ENCODE measurements at regions of chr4 and their contacts with region 1.

Region 1: DNA sequence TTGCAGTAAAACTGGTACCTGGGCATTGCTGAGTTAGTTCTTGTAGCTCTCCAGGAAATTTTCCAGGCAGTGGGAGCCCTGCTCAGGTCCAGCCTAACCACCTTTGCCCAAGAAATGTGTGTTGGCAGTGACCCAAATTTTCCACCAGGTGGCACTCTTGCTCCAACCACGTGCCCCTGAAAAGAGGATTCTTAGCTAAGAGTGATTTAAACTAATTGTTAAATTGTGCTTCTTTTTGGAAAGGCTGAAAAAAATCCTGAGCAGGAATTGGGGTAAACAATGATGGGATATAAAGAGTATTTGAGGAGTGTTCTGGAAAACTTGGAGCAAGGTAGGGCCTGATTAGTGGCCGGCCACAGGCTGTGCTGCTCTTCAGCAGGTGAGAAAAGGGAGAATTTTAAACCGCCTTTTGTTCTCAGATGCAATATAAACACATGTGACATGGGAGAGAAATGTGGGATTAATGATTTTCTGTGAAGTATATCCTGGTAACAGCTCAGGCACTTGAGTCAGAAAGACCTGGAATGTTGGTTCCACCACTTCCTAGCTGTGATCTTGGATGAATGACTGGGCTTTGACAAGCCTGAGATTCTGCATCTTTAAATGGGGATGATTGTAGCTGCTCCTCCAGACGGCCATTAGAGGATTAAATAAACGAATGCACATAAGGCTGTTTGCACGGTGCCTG is 219.6 kb downstream of the PTTG2 start:
- DNase-seq: peak in 3 of 4 donors; percentile 63 to 81 (median 69)
- ATAC-seq: peak; percentile 84
- H3K4me3 ChIP-seq: no peak overlapping the region
- H3K27ac ChIP-seq: no peak overlapping the region
- H3K4me1 ChIP-seq: peaks cover 0 to 44% of the 10 kb centered on the region in 2 donors
- H3K27me3 ChIP-seq: no peaks in the 10 kb centered on the region
- CTCF ChIP-seq: peak; percentile 82 to 85

Region 2: DNA sequence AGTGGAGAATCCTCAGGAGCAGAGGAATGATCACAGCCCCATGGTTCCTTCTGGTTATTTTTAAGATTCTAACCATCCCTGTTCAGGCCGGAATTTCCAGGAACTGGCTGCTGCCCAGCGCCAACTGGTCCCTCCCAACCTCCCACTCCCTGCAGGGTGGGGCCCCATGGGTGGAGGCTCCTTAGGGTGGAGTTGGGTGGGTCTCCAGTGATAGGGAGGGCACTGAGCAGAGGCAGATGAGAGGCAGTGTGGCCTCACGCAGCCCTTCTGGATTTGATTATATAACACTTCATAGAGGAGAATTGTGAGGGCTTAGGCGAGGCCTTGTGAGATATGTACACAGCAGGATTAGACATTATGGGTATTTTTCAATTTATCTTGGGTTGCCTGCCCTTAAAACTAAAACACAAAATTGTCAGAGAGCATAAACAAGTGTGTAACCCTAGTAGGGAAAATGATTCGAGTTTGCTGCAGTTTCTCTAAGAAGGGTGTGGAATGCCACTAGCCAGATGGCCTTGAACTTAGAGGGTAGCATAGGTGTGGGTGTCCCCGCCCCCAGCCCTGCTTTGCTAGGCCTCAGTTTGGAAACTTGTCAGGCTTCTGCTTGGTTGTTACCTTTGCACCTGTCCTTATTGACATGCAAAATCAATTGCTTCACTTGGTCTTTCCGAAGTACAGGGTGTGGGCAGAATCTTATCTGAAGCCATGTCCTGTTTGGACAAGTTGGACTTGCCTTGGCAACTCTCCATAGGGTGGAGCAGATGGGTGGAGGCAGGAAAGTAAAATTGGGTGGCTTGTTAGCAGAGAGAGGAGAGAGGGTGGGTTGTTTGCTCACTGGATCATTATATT is 493.5 kb after region 1 on chr4:
- intact Hi-C with region 1: loop called in 1 of 2 experiments (anchors 5 kb)
- DNase-seq: peak in 3 of 4 donors; percentile 61 to 81 (median 78)
- ATAC-seq: peak; percentile 63
- H3K4me3 ChIP-seq: no peak overlapping the region
- H3K27ac ChIP-seq: peak overlapping the region; percentile 78 to 100
- H3K4me1 ChIP-seq: peaks cover 68 to 97% of the 10 kb centered on the region in 2 donors
- H3K27me3 ChIP-seq: no peaks in the 10 kb centered on the region
- CTCF ChIP-seq: no peak

Region 3: DNA sequence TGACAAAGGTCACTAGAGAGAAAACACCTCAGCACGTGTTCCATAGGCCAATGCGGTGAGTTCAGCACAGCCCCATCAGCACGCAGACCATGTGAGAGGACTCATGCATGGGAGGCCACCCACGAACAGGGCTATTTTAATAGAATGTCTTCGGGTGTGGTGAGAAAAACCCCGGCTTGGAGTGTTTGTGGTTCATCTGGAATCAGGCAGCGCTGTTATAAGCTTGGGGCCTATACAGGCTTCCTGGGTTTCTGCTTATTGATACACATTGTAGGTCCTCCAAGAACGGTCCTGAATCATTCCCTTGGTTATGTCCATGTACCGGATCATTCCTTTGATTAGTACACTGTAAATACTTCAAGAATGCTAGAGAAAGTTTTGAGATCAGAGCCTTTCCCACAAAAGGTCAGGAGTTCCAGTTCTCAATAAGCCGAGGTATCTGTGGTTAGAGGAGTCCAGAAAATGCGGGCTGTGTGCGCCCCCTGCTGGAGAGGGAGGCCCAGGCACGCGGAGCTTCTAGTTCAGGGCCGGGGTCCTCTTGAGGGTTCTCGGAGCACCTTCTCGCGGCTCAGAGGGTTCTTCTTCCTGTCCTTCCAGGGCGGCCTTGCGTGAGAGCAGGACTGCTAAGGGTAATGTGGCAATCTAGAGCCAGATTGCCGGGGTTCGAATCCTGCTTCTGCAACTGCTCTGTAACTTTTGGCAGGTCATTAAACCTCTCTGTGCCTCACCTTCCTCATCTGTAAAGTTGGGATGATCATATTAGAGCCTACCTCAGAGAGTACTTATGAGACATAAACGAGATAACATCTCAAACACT is 551.2 kb after region 1 on chr4:
- intact Hi-C with region 1: loop called (anchors 5 to 10 kb)
- DNase-seq: peak; percentile 71 to 94 (median 79)
- ATAC-seq: peak; percentile 87
- H3K4me3 ChIP-seq: no peak overlapping the region
- H3K27ac ChIP-seq: no peak overlapping the region
- H3K4me1 ChIP-seq: peaks cover 0 to 14% of the 10 kb centered on the region in 2 donors
- H3K27me3 ChIP-seq: no peaks in the 10 kb centered on the region
- CTCF ChIP-seq: peak; percentile 91 to 98

Measured in left lung (tissue), 14 donors.